GM12878 (cell line): ENCODE measurements at regions of chr14 and their contacts with region 1.

Region 1: GRCh38 chr14:64338616-64339316 is 44.6 kb upstream of the ESR2 start:
- DNase-seq: peak; percentile 96
- ATAC-seq: peak; percentile 91
- H3K4me3 ChIP-seq: peak overlapping the region; percentile 90
- H3K27ac ChIP-seq: peak overlapping the region; percentile 80
- H3K4me1 ChIP-seq: peaks cover 11% of the 10 kb centered on the region
- H3K27me3 ChIP-seq: no peaks in the 10 kb centered on the region
- CTCF ChIP-seq: no peak
- EP300 ChIP-seq: no peak
- POLR2A ChIP-seq: peak; percentile 78
- RAD21 ChIP-seq: no peak

Region 2: GRCh38 chr14:64387694-64388532 is 49.1 kb after region 1 on chr14 and contains the start of gene MTHFD1:
- CTCF ChIA-PET with region 1: interaction called, 11 read pairs
- POLR2A ChIA-PET with region 1: interaction called, 16 read pairs
- RAD21 ChIA-PET with region 1: interaction called, 12 read pairs
- SMC1A ChIA-PET with region 1: interaction called, 21 read pairs
- in situ Hi-C with region 1: no loop called
- intact Hi-C with region 1: loop called (anchors 5 kb)
- DNase-seq: peak; percentile 99
- ATAC-seq: peak; percentile 87
- H3K4me3 ChIP-seq: peak within 1 kb of the TSS; percentile 97
- H3K27ac ChIP-seq: peak within 1 kb of the TSS; percentile 82
- H3K4me1 ChIP-seq: peaks cover 10% of the 10 kb centered on the region
- H3K27me3 ChIP-seq: no peaks in the 10 kb centered on the region
- CTCF ChIP-seq: no peak
- EP300 ChIP-seq: 0 out of 4 replicates have a peak, but pooled peaks of 1 of the 2 experiments have one; percentile 13
- POLR2A ChIP-seq: peak; percentile 83
- RAD21 ChIP-seq: no peak
- polyA plus RNA-seq, gene MTHFD1: 140 to 177 TPM

Region 3: DNA sequence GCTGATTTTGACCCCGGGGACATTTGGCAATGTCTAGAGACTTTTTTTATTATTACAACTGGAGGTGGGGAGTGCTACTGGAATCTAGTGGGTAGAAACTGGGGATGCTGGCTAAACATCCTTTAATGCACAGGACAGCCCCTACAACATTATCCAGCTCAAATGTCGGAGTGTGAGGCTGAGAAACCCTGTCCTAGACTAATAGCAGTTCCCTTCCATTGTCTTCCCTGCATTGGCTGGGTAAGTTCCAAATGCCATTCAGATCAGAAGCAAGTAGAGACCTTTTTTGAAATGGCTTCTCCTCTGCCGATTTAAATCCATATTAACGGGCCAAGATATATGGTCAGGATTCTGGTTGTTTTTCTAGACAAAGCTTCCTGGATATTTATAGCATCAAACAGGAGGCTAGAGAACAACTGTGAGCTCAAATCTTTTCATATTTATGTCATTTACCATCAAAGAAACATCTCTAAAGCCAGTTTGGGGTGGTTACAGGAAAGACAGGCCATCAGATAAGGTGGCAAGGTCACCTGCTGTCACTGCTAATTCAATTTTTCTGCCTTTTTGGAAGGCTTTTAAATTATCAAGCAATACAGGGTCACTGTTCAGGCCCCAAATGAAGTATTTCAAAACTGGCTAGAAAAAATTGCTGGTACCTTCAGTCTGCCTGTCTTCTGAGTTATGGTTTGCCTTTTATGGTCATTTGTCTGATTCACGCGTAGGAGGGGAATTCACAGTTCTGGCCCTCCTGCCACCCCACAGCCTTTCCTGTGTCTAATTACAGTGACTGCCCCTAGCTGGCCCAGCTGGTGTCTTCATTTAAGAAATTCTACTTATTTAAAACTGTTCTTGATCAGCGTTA is 106.4 kb after region 1 on chr14:
- CTCF ChIA-PET with region 1: interaction called, 10 read pairs
- POLR2A ChIA-PET with region 1: interaction called, 3 read pairs
- RAD21 ChIA-PET with region 1: interaction called, 5 read pairs
- SMC1A ChIA-PET with region 1: interaction called, 8 read pairs
- in situ Hi-C with region 1: no loop called
- intact Hi-C with region 1: no loop called
- DNase-seq: peak; percentile 84
- ATAC-seq: peak; percentile 99
- H3K4me3 ChIP-seq: no peak overlapping the region
- H3K27ac ChIP-seq: peak overlapping the region; percentile 97
- H3K4me1 ChIP-seq: peaks cover 22% of the 10 kb centered on the region
- H3K27me3 ChIP-seq: no peaks in the 10 kb centered on the region
- CTCF ChIP-seq: peak in 2 of 3 experiments; percentile 15 to 20; a peak in 1 of 6 replicates
- EP300 ChIP-seq: peak; percentile 75 to 77; a peak in 2 of 4 replicates
- POLR2A ChIP-seq: peak; percentile 37; the same call in 1 of the 2 replicates
- RAD21 ChIP-seq: no peak

Region 4: DNA sequence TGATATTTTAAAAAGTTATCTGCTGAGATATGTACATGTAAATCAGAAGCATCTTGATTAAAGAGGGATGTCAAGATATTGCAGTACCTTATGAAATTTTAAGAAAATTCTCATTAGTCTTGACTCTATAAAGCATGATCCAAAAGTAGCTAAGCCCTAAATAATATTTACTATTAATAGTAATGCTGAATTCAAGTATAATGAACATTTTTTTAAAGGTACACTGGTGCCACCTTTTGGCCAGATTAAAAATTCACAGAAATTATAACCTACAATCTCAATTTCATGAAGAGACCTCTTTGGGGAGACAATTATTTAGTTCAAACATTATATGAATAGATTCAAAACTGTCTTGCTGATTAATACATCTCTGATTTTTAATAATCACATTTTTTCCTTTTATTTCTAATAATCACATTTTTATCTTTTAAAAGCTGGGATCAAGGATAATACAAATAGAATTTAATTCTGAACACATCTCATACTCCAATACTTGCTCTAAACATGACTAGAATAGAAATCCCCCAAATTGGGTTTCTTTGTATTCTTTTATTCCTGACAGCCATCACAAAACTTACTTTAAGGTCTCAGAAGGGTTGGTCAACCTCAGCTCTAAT is 140.0 kb after region 1 on chr14:
- CTCF ChIA-PET with region 1: interaction called, 165 read pairs
- POLR2A ChIA-PET with region 1: interaction called, 4 read pairs
- RAD21 ChIA-PET with region 1: interaction called, 51 read pairs
- SMC1A ChIA-PET with region 1: interaction called, 46 read pairs
- in situ Hi-C with region 1: loop called (anchors 5 kb)
- intact Hi-C with region 1: no loop called
- DNase-seq: no peak
- ATAC-seq: peak; percentile 39; the same call in 1 of the 3 replicates
- H3K4me3 ChIP-seq: no peak overlapping the region
- H3K27ac ChIP-seq: no peak overlapping the region
- H3K4me1 ChIP-seq: peaks cover 7% of the 10 kb centered on the region
- H3K27me3 ChIP-seq: no peaks in the 10 kb centered on the region
- CTCF ChIP-seq: peak in 2 of 3 experiments; percentile 33 to 54; a peak in 3 of 6 replicates
- EP300 ChIP-seq: no peak
- POLR2A ChIP-seq: no peak
- RAD21 ChIP-seq: peak; percentile 57

Region 5: GRCh38 chr14:64510825-64511671 is 172.3 kb after region 1 on chr14:
- CTCF ChIA-PET with region 1: interaction called, 45 read pairs
- POLR2A ChIA-PET with region 1: no interaction called
- RAD21 ChIA-PET with region 1: interaction called, 24 read pairs
- SMC1A ChIA-PET with region 1: interaction called, 31 read pairs
- in situ Hi-C with region 1: no loop called
- intact Hi-C with region 1: loop called (anchors 5 kb)
- DNase-seq: no peak
- ATAC-seq: peak; percentile 50
- H3K4me3 ChIP-seq: peak overlapping the region; percentile 40; the same call in 1 of the 2 replicates
- H3K27ac ChIP-seq: peak overlapping the region; percentile 68
- H3K4me1 ChIP-seq: peaks cover 25% of the 10 kb centered on the region
- H3K27me3 ChIP-seq: no peaks in the 10 kb centered on the region
- CTCF ChIP-seq: peak; percentile 82 to 95 (median 84)
- EP300 ChIP-seq: no peak
- POLR2A ChIP-seq: no peak
- RAD21 ChIP-seq: peak; percentile 68

Region 6: DNA sequence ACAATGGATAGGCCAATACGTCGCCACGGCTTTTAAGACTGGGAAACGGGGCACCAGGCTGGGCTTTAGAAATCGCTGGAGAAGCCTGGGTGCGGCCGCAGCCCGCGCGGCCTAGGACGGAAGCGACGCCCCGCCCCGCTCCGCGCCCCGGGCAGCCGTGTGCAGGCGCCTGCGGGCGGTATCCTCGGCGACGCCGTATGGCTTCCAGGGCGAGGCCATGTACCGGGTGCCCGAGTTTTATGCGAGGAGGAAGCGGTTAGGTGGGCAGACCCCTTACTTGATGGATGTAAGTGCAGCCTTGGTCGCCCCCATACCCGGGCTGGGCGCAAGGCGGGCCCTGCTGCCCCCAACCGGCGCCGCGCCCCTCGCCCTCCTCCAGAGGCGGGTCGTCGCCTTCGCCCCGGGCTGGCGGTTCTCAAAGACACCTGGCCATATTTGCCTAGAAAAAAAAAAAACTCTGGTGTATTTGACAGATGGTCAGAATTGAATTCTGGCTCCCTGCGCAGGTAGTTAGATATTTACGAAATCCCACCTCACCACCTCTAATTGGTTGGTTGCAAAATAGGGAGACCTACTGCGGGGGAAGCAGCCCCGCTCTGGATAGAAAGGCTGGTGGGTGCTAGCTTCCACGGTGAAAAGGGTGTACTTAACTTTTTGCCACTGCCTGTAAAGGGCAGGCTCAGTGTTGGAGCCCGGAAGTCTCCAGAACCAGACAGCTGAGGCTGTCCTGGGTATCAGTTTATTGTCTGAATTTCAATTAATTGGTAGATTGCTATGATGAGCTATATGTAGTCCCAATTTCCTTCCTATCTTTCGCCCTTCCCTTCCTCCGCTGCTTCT is 211.2 kb after region 1 on chr14 and contains the start of gene PPP1R36:
- CTCF ChIA-PET with region 1: no interaction called
- POLR2A ChIA-PET with region 1: no interaction called
- RAD21 ChIA-PET with region 1: no interaction called
- SMC1A ChIA-PET with region 1: no interaction called
- in situ Hi-C with region 1: no loop called
- intact Hi-C with region 1: no loop called
- DNase-seq: no peak
- ATAC-seq: peak; percentile 89
- H3K4me3 ChIP-seq: no peak within 1 kb of the TSS
- H3K27ac ChIP-seq: no peak within 1 kb of the TSS
- H3K4me1 ChIP-seq: no peaks in the 10 kb centered on the region
- H3K27me3 ChIP-seq: peaks cover 3 to 14% of the 10 kb centered on the region in 2 experiments
- CTCF ChIP-seq: no peak
- EP300 ChIP-seq: no peak
- POLR2A ChIP-seq: no peak
- RAD21 ChIP-seq: no peak
- polyA plus RNA-seq, gene PPP1R36: not detected

Region 7: DNA sequence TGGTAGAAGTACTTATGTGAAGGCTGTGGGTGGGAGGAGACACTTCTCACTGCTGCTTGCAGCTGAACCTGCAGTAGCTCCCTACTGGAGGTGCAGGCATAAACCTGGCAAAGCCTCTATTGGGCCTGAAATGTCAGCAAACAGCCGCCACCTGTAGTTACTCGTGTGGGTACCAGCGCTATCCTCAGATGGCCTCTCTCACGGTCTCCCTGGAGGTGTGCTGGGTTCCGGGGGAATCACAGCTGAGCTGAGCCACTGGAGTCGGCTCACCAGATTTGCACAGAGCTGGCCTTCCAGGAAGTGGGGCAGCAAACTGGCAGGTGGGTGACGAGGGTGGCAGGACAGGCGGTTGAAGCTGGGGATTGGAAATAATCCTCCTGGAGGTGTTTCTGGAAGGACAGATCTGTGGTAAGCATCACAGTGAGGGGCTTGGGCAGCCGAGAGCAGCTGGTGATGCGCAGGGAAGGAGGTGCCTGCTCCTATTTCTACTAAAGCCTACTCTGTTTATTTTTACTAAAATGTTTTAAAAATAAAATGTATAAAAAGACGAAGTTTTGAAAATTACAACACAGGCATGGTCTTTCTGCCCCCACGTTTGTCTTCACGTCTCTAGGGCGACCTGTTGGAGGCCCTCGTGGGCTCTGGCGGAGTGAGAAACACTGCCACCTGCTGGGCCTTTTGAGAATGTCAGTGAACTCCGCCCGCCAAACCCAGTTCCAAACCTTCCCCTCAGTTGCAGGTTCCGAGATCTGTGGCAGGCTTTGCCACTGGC is 297.6 kb after region 1 on chr14:
- CTCF ChIA-PET with region 1: interaction called, 69 read pairs
- POLR2A ChIA-PET with region 1: no interaction called
- RAD21 ChIA-PET with region 1: interaction called, 25 read pairs
- SMC1A ChIA-PET with region 1: interaction called, 28 read pairs
- in situ Hi-C with region 1: loop called (anchors 5 kb)
- intact Hi-C with region 1: no loop called
- DNase-seq: no peak
- ATAC-seq: peak; percentile 89
- H3K4me3 ChIP-seq: no peak overlapping the region
- H3K27ac ChIP-seq: no peak overlapping the region
- H3K4me1 ChIP-seq: no peaks in the 10 kb centered on the region; the same call in 1 of the 2 replicates
- H3K27me3 ChIP-seq: no peaks in the 10 kb centered on the region
- CTCF ChIP-seq: peak; percentile 81 to 84 (median 81)
- EP300 ChIP-seq: no peak
- POLR2A ChIP-seq: no peak
- RAD21 ChIP-seq: peak; percentile 65